Mammary epithelial cell (primary cell): ENCODE measurements at regions of chr19 and their contacts with region 1.

Region 1: DNA sequence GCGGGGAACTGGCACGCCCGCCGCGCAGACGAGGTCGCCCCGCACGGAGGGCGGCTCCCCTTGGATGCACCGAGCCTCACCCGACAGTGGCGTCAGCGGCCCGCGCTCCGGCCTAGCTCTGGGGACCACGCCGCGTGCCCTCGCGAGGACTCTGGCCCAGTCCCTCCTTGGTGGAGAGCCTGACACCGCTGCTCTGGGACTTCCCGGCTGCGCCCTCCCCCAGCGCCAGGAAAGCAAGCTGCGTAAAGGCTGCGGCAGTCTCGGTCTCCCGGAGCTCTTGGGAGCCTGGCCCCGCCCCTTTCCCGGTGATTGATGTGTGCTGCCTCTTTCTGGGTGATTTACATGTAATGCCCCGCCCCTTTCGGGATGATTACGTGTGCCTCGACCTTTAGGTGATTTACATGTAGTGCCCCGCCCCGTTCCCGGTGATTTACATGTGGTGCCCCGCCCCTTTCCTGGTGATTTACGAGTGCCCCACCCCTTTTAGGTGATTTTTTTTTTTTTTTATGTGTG is at the start of gene LENG9:
- DNase-seq: peak; percentile 98
- H3K4me3 ChIP-seq: peak within 1 kb of the TSS; percentile 54 to 68 (median 66)
- H3K27ac ChIP-seq: peak within 1 kb of the TSS; percentile 70
- H3K4me1 ChIP-seq: peaks cover 22% of the 10 kb centered on the region
- H3K27me3 ChIP-seq: no peaks in the 10 kb centered on the region
- CTCF ChIP-seq: no peak
- total RNA-seq, gene LENG9: 6.3 to 7.3 TPM

Region 2: GRCh38 chr19:54448774-54449700 is 14.6 kb before region 1 on chr19 and contains the start of gene LENG8:
- CTCF ChIA-PET with region 1: no interaction called
- dilution Hi-C with region 1: no loop called
- in situ Hi-C with region 1: no loop called
- intact Hi-C with region 1: loop called (anchors 1 kb)
- DNase-seq: peak; percentile 97
- H3K4me3 ChIP-seq: peak within 1 kb of the TSS; percentile 78 to 94 (median 92)
- H3K27ac ChIP-seq: peak within 1 kb of the TSS; percentile 93
- H3K4me1 ChIP-seq: peaks cover 16% of the 10 kb centered on the region
- H3K27me3 ChIP-seq: no peaks in the 10 kb centered on the region
- CTCF ChIP-seq: no peak
- total RNA-seq, gene LENG8: 68.3 to 212 TPM

Region 3: GRCh38 chr19:54506079-54506478 is 42.5 kb after region 1 on chr19:
- CTCF ChIA-PET with region 1: no interaction called
- dilution Hi-C with region 1: no loop called
- in situ Hi-C with region 1: no loop called
- intact Hi-C with region 1: no loop called
- DNase-seq: peak; percentile 11
- H3K4me3 ChIP-seq: no peak overlapping the region
- H3K27ac ChIP-seq: no peak overlapping the region
- H3K4me1 ChIP-seq: no peaks in the 10 kb centered on the region
- H3K27me3 ChIP-seq: no peaks in the 10 kb centered on the region
- CTCF ChIP-seq: no peak

Region 4: GRCh38 chr19:54586397-54586796 is 122.8 kb after region 1 on chr19:
- CTCF ChIA-PET with region 1: no interaction called
- dilution Hi-C with region 1: no loop called
- in situ Hi-C with region 1: no loop called
- intact Hi-C with region 1: no loop called
- DNase-seq: no peak
- H3K4me3 ChIP-seq: no peak overlapping the region
- H3K27ac ChIP-seq: no peak overlapping the region
- H3K4me1 ChIP-seq: no peaks in the 10 kb centered on the region
- H3K27me3 ChIP-seq: no peaks in the 10 kb centered on the region
- CTCF ChIP-seq: no peak

Region 5: DNA sequence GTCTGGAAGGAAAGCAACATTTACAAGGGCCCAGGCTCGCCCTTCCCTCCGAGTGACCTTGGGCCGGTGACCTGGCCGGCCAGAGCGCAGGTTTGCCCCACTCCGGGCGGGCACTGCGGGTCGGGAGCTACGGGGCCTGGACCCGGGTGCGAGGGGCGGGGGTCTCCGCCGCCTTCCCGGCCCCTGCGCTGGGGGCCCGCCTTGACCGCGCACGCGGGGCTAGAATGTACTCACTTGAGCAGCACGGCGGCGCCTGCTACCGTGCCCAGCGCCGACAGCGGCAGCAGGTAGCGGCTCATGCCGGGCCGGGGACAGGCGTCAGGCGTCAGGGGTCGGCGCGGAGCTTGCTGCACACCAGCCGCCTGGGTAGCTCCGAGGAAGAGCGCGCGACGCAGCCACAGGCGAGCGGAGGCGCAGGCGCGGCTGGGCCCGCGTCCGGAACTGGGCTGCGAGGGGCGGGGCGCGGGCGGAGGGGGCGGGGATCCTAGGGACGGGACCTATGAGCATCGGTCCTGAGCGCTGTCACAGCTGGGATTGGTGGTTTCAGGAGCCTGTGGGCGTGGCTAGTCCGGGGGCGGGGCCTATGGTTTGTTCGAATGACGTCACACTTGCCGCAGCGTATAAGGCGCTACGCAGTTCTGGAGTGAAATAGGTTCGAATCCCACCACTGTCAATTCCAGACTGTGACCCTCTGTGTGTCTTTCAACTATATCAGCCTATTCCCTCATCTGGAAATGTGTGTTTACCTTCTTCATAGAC is 599.3 kb after region 1 on chr19 and contains the start of gene RDH13:
- CTCF ChIA-PET with region 1: no interaction called
- dilution Hi-C with region 1: no loop called
- in situ Hi-C with region 1: loop called in 1 of 2 experiments (anchors 25 kb)
- intact Hi-C with region 1: loop called (anchors 5 kb)
- DNase-seq: peak; percentile 90
- H3K4me3 ChIP-seq: peak within 1 kb of the TSS; percentile 88 to 90 (median 90)
- H3K27ac ChIP-seq: peak within 1 kb of the TSS; percentile 41
- H3K4me1 ChIP-seq: peaks cover 2% of the 10 kb centered on the region
- H3K27me3 ChIP-seq: no peaks in the 10 kb centered on the region
- CTCF ChIP-seq: no peak
- total RNA-seq, gene RDH13: 18.0 to 19.8 TPM

Region 6: DNA sequence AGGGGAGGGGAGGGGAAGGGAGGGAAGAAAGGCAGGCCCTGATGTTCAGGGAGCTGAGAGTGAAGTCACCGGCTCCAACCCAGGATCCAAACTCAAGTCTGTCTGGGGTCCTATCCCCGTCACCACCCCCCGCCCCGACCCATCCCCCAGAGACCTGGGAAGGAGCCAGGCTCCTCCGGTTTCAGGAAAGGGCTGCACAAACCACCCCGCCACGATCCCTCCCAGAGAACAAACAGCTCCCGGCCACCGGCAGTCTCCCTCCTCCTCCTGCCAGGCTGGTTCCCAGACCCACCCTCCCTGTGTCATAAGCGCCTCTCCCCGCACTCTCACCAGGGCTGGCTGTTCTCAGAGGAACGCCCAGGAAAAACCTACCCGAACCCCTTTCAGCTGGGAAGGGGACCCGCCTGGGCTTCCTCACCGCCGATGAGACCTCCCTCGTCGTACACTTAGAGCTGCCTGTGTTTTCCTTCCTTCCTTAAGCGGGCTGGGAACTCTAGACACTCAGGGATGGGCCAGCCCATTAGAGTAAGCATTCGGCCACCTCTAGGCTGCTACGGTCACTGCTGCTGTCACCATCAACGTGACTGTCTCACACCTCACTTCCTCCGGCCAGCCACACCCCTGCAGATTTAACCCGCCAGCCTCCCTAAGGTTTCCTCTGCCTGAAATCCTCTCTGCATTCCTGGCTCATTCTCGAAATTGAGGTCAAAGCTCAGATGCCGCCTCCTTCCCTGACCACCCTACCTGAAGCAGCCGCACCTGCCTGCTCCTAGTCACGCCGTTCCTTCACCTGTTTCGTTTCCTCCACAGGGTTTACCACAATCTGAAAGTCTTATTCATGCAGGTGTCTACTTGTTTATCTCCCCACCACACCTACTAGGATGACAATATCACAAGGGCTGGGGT is 605.6 kb after region 1 on chr19:
- CTCF ChIA-PET with region 1: no interaction called
- dilution Hi-C with region 1: no loop called
- in situ Hi-C with region 1: loop called in 1 of 2 experiments (anchors 25 kb)
- intact Hi-C with region 1: loop called (anchors 5 kb)
- DNase-seq: peak; percentile 78
- H3K4me3 ChIP-seq: peak overlapping the region; percentile 7 to 46 (median 24)
- H3K27ac ChIP-seq: no peak overlapping the region
- H3K4me1 ChIP-seq: peaks cover 12% of the 10 kb centered on the region
- H3K27me3 ChIP-seq: no peaks in the 10 kb centered on the region
- CTCF ChIP-seq: no peak

Region 7: DNA sequence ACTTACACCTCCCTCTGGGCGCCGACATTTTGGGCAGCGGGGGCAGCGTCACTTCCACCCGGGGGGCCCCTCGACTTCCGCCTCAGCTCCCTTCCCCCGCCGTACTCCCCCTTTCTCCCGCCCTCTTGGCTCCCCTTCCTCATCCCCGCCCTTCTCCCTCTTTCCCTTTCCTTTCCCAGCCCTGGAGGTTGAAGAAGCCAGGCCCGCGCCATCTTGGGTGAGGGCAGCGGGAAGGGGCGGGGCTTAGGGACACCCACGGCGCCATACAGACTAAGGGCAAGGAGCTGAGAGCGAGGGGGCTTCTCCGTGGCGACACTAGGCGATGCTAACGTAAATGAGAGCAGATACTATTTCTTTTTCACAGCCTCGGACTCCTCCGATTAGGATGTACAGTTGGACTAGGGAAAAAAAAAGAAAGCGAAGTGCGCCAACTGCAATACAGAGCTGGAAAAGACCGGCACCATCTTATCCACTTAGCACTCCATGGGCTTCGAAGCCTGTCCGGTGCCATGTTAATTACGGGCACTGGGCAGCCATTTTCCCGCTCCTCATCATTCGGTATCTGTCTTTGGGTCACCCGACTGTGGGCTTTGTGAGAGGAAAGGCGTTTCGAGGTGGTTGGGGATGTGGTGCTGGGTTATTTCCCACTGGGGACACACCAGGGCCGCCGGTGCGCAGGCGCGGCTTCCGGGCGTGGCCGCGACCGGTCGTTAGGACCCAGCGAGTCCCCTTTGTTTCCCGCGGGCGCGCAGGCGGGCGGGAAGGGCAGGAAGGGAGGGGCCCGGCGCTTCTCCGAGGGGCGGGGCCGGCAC is 1136.1 kb after region 1 on chr19 and contains the start of gene FIZ1:
- CTCF ChIA-PET with region 1: no interaction called
- dilution Hi-C with region 1: loop called (anchors 25 kb)
- in situ Hi-C with region 1: no loop called
- intact Hi-C with region 1: no loop called
- DNase-seq: peak; percentile 98
- H3K4me3 ChIP-seq: peak within 1 kb of the TSS; percentile 60 to 92 (median 80)
- H3K27ac ChIP-seq: peak within 1 kb of the TSS; percentile 89
- H3K4me1 ChIP-seq: peaks cover 10% of the 10 kb centered on the region
- H3K27me3 ChIP-seq: no peaks in the 10 kb centered on the region
- CTCF ChIP-seq: no peak
- total RNA-seq, gene FIZ1: 5.3 to 13.4 TPM

Region 8: DNA sequence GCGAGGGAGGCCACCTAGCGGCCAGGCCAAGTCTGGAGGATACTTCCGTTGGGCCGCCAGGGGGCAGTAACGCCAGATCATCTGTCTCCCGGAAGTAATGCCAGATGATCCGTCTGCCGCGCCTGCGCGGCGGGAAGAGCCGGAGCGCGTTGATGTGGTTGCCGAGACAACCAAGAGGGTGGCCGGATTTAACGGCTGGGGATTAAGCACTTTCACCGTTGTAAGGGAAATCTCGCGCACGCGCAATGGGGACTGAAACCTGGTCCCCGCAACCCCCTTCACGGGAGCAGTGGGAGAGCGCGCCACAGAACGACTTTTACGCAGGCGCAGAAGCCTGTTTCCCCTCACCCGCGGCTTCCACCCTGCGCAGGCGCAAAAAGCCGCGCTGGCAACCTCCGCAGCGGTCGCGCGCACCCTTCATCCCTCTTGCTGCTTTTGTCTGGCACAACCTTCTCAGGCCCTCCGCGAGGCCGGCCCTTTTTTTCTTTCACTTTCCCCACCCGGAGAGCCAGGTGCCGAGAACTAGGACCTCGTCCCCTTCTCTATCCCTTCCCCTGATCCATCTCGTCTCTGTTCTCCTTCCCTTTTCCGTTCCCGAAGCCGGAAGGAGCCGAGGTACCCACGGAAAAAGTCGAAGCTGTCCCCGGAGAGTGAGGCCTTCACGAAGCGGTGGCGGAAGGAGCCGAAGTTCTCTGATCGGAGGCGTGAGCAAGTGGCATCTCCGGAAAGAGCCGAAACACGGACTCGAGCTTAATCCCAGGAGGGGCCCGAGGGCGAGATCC is 1190.4 kb after region 1 on chr19:
- CTCF ChIA-PET with region 1: no interaction called
- dilution Hi-C with region 1: no loop called
- in situ Hi-C with region 1: loop called in 1 of 2 experiments (anchors 25 kb)
- intact Hi-C with region 1: no loop called
- DNase-seq: peak; percentile 98
- H3K4me3 ChIP-seq: peak overlapping the region; percentile 46 to 67 (median 60)
- H3K27ac ChIP-seq: peak overlapping the region; percentile 90
- H3K4me1 ChIP-seq: peaks cover 17% of the 10 kb centered on the region
- H3K27me3 ChIP-seq: no peaks in the 10 kb centered on the region
- CTCF ChIP-seq: peak; percentile 99 to 100